Activated T-helper 1 cell treated with anti-CD3 and anti-CD28 coated beads, Interleukin-12 subunit alpha, Interleukin-12 subunit beta, Interleukin-2, Interleukin-4 antibody, amounts not matched to agents 30 ng/mL and 10 ng/mL and 1 ng/mL, durations not matched to agents 14 hours and 24 hours and 36 hours (primary cell): ENCODE measurements at regions of chr5 and their contacts with region 1.

Region 1: DNA sequence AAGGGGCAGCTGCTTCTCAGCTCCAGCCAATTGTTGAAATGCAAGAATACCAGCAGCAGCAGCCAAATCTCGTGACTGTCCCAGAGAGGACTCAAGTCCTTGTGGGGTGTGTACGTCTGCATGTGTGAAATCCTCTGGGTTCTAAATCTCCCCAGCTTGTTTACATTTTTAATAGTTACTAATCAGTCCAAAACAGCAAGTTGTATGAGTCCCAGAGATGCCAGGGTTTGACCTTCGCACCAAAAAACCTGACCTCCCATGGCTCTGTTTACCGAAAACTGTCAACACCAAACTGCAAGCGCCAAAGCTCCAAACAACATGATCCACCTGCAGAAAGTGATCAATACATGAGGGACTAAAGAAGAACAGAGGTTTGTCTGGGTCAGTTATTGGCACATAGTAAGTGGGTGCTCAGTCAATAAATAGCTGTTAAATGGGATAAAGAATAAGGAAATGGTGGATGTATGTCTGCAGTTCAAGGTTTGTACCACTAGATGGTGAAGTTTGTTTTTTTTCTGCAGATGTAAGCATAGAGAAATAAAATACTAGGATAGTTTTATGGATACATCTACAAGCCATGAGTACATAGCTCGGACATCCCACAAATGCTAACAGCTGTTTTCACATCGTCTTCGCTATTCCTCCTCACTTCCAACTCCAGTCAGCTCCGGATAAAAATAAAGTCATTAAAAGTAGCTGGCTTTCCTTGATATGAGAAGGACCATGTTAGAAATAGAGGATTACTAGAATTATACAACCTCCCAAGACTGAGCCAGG is 85.3 kb upstream of the ADRB2 start:
- DNase-seq: no peak
- H3K4me3 Mint-ChIP-seq: no peak overlapping the region
- H3K27ac Mint-ChIP-seq: no peak overlapping the region
- H3K4me1 Mint-ChIP-seq: no peaks in the 10 kb centered on the region
- H3K27me3 Mint-ChIP-seq: peaks cover 16% of the 10 kb centered on the region

Region 2: GRCh38 chr5:148632255-148633066 is 108.7 kb before region 1 on chr5:
- intact Hi-C with region 1: no loop called
- DNase-seq: no peak
- H3K4me3 Mint-ChIP-seq: no peak overlapping the region
- H3K27ac Mint-ChIP-seq: no peak overlapping the region
- H3K4me1 Mint-ChIP-seq: peaks cover 7% of the 10 kb centered on the region
- H3K27me3 Mint-ChIP-seq: peaks cover 28% of the 10 kb centered on the region

Region 3: GRCh38 chr5:148826053-148826738 is 85.0 kb after region 1 on chr5 and contains the start of gene ADRB2:
- intact Hi-C with region 1: loop called (anchors 5 kb)
- DNase-seq: peak; percentile 86
- H3K4me3 Mint-ChIP-seq: peak within 1 kb of the TSS; percentile 89
- H3K27ac Mint-ChIP-seq: peak within 1 kb of the TSS; percentile 75
- H3K4me1 Mint-ChIP-seq: peaks cover 34% of the 10 kb centered on the region
- H3K27me3 Mint-ChIP-seq: peaks cover 63% of the 10 kb centered on the region
- total RNA-seq, gene ADRB2: 0.83 and 0.93 TPM in 2 replicates

Region 4: GRCh38 chr5:148957591-148958202 is 216.5 kb after region 1 on chr5:
- intact Hi-C with region 1: loop called (anchors 1 kb)
- DNase-seq: no peak
- H3K4me3 Mint-ChIP-seq: no peak overlapping the region
- H3K27ac Mint-ChIP-seq: no peak overlapping the region
- H3K4me1 Mint-ChIP-seq: no peaks in the 10 kb centered on the region
- H3K27me3 Mint-ChIP-seq: peaks cover 7% of the 10 kb centered on the region

Region 5: GRCh38 chr5:148998174-148998797 is 257.1 kb after region 1 on chr5:
- intact Hi-C with region 1: loop called (anchors 1 kb)
- DNase-seq: no peak
- H3K4me3 Mint-ChIP-seq: no peak overlapping the region
- H3K27ac Mint-ChIP-seq: no peak overlapping the region
- H3K4me1 Mint-ChIP-seq: no peaks in the 10 kb centered on the region
- H3K27me3 Mint-ChIP-seq: peaks cover 11% of the 10 kb centered on the region